Activated naive CD4-positive, alpha-beta T cell treated with anti-CD3 and anti-CD28 coated beads for 36 hours (primary cell): ENCODE measurements at regions of chr1 and their contacts with region 1.

Region 1: DNA sequence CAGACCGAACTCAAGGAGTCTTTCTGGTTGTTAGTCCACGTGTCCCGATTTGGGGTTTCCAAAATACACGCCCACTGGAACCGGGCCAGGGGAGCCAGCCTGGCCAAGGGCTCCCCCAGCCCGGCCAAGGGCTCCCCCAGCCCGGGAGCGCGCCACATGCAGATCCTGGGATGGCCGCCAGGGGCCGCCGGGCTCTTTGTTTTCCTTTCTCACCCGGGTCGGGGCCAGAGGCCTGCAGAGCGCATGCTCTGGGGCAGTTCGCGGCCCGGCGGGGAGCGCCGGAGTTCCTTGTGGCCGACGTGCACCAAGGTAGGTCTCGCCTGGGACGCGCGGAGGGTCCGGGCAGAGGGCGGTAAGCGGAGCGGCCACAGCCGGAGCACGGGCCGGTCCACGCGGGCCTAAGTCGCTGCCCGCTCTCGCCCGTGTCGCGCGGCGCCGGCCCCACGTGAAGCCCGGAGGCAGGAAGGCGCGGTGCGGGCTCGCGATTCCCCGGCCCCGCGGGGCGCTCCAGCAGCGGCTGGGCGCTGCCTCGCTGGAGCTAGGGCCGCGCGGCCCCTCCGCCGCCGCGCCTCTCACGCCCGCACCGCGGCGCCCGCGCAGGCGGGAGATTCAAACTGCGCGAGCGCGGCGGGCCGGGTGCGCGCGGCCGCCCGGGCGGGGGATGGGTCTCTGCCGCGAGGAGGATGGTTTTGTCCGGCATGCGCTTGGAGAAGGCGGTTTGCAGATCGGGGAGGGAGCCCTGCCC is 12.3 kb downstream of the RCC1 start:
- DNase-seq: peak; percentile 92
- H3K4me3 Mint-ChIP-seq: peak overlapping the region; percentile 90
- H3K27ac Mint-ChIP-seq: peak overlapping the region; percentile 91
- H3K4me1 Mint-ChIP-seq: peaks cover 38% of the 10 kb centered on the region
- H3K27me3 Mint-ChIP-seq: no peaks in the 10 kb centered on the region

Region 2: GRCh38 chr1:28535180-28535579 is 17.0 kb after region 1 on chr1:
- CTCF ChIA-PET with region 1: no interaction called
- intact Hi-C with region 1: no loop called
- DNase-seq: no peak
- H3K4me3 Mint-ChIP-seq: no peak overlapping the region
- H3K27ac Mint-ChIP-seq: no peak overlapping the region
- H3K4me1 Mint-ChIP-seq: no peaks in the 10 kb centered on the region
- H3K27me3 Mint-ChIP-seq: no peaks in the 10 kb centered on the region

Region 3: GRCh38 chr1:28552758-28553663 is 34.8 kb after region 1 on chr1 and contains the start of gene TRNAU1AP:
- CTCF ChIA-PET with region 1: no interaction called
- intact Hi-C with region 1: loop called (anchors 1 kb)
- DNase-seq: peak; percentile 99
- H3K4me3 Mint-ChIP-seq: peak within 1 kb of the TSS; percentile 94
- H3K27ac Mint-ChIP-seq: peak within 1 kb of the TSS; percentile 97
- H3K4me1 Mint-ChIP-seq: peaks cover 19% of the 10 kb centered on the region
- H3K27me3 Mint-ChIP-seq: no peaks in the 10 kb centered on the region
- total RNA-seq, gene TRNAU1AP: 36.7 to 39.4 TPM

Region 4: DNA sequence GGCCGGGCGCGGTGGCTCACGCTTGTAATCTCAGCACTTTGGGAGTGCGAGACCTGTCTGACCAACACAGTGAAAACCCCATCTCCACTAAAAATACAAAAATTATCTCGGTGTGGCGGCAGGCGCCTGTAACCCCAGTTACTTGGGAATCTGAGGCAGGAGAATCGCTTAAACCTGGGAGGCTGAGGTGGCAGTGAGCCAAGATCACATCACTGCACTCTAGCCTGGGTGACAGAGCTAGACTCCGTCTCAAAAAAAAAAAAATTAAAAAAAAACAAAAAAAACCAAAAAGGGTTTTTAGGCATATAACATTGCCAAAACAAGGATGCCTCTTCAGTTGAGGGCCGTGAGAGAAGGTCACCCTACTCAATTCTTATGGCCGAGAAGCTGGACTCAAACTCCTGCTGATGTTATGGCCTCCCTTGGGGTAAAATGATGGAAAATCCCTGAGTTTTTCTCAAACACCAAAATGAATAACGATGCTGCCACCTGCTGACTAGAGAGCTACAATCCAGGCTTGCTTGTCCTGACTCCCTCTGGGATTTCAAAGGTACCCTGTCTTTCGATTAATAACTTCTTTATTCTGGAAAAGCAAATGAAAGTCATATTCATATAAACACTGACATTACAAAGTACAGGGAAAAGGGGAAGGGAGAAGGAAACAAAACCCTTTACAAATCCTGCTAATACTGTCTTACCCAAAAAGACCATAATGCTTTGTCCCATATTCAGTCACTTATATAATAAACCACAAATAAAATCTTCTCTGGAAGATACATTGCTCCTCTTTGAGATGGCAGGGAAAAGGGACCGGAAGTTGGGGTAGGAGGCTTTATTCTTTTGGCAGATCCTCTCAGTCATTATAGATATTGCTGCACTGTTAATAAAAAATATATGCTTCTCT is 84.6 kb after region 1 on chr1:
- CTCF ChIA-PET with region 1: no interaction called
- intact Hi-C with region 1: loop called (anchors 1 kb)
- DNase-seq: peak; percentile 69
- H3K4me3 Mint-ChIP-seq: no peak overlapping the region
- H3K27ac Mint-ChIP-seq: peak overlapping the region; percentile 24
- H3K4me1 Mint-ChIP-seq: no peaks in the 10 kb centered on the region
- H3K27me3 Mint-ChIP-seq: no peaks in the 10 kb centered on the region